ENCODE measurements at regions of chr6 and their contacts with region 1.

Region 1: DNA sequence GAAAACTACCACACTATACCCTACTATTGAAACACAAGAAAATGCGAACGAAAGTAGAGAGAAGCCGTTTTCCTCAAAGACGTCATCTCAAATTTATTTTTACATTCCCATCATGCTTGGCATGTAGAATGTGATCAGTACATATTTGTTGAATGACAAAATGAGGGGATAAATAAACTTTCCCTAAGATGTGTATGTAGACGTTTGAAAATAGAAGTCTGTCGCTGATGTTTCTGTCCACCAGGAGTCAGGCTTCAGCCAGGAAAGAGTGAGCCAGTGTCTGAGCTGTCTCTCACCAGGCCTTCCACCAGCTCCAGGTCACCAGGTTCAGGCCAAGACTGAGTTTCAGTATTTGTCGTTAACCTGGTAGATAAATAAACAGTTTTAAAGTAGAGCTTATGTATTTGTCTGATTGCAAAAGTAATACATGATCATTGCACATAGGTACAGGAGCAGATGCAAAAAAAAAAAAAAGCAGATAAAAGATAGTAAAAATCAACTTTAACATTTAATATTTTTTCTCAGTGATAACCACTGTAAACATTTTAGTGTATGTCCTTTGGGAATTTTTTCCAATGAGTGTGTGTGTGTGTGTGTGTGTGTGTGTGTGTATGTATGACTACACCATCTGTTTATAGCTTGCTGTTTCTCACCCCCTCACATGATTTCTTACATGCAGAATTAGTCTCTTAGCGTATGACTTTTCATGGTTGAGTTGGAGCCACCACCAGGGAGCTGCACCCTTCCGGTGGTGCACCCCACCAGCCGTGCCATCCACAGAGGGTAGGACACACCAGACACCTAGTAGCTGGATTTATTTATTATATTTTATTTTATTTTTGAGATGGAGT is 26.2 kb downstream of the WRNIP1 start:
- DNase-seq: peak; percentile 74
- ATAC-seq: peak; percentile 76
- H3K4me3 Mint-ChIP-seq: no peak overlapping the region
- H3K27ac Mint-ChIP-seq: peak overlapping the region; percentile 47
- H3K4me1 Mint-ChIP-seq: peaks cover 31% of the 10 kb centered on the region
- H3K27me3 Mint-ChIP-seq: no peaks in the 10 kb centered on the region

Region 2: DNA sequence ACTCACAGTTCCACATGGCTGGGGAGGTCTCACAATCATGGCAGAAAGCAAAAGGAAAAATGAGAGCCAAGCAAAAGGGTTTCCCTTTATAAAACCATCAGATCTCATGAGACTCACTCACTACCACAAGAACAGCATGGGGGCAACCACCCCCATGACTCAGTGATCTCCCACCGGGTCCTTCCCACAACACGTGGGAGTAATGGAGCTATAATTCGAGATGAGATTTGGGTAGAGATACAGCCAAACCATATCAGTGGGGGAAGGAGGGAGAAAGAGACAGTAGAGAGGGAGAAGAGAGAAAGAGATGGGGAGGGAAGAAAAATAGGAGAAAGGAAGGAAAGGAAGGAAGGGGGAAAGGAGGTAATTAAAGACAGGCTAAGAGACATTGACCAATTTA is 576.0 kb before region 1 on chr6:
- CTCF ChIA-PET with region 1: no interaction called
- POLR2A ChIA-PET with region 1: no interaction called
- DNase-seq: no peak
- ATAC-seq: no peak
- H3K4me3 Mint-ChIP-seq: no peak overlapping the region
- H3K27ac Mint-ChIP-seq: no peak overlapping the region
- H3K4me1 Mint-ChIP-seq: peaks cover 5% of the 10 kb centered on the region
- H3K27me3 Mint-ChIP-seq: peaks cover 1% of the 10 kb centered on the region

Region 3: GRCh38 chr6:2765166-2765895 is 26.0 kb before region 1 on chr6 and contains the start of gene WRNIP1:
- CTCF ChIA-PET with region 1: interaction called, 26 read pairs
- POLR2A ChIA-PET with region 1: interaction called, 5 read pairs
- DNase-seq: peak; percentile 98
- ATAC-seq: peak; percentile 91
- H3K4me3 Mint-ChIP-seq: peak within 1 kb of the TSS; percentile 92
- H3K27ac Mint-ChIP-seq: peak within 1 kb of the TSS; percentile 97
- H3K4me1 Mint-ChIP-seq: peaks cover 55% of the 10 kb centered on the region
- H3K27me3 Mint-ChIP-seq: no peaks in the 10 kb centered on the region
- total RNA-seq, gene WRNIP1: 48.2 to 49.6 TPM

Region 4: DNA sequence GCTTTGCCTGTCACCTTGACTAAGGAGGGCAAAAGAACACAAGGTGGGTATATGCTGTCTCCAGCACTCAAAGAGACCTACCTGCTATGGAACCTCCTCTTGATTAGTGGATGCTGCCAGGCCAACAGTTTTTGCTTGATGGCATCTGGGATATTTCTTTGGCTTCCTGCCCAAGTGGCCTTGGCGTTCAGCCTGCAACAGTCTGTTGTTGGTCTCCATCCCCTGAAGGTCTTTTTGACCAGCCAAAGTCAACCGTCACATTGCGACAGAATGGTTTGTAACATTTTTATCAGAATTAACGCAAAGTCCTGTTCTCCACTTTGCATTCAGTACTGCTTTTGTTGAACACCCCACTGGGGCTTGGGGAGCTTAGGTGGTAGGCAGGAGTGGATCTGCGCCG is 13.2 kb after region 1 on chr6:
- CTCF ChIA-PET with region 1: interaction called, 11 read pairs
- POLR2A ChIA-PET with region 1: no interaction called
- DNase-seq: no peak
- ATAC-seq: no peak
- H3K4me3 Mint-ChIP-seq: no peak overlapping the region
- H3K27ac Mint-ChIP-seq: no peak overlapping the region
- H3K4me1 Mint-ChIP-seq: peaks cover 15% of the 10 kb centered on the region
- H3K27me3 Mint-ChIP-seq: no peaks in the 10 kb centered on the region

Region 5: DNA sequence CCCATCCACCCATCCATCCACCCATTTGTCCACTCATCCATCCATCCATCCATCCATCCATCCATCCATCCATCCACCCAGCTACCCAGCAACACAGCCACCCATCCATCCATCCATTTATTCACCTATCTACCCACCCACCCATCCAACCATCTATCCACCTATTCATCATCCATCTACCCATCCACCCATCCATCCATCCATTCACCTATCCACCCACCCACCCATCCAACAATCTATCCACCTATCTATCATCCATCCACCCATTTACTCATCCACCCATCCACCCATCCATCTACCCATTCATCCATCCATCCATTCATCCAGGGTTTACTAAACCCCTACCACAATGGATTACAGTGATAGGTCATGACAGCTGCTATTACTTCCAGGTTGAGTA is 42.9 kb after region 1 on chr6:
- CTCF ChIA-PET with region 1: interaction called, 79 read pairs
- POLR2A ChIA-PET with region 1: no interaction called
- DNase-seq: no peak
- ATAC-seq: no peak
- H3K4me3 Mint-ChIP-seq: no peak overlapping the region
- H3K27ac Mint-ChIP-seq: no peak overlapping the region
- H3K4me1 Mint-ChIP-seq: peaks cover 17% of the 10 kb centered on the region
- H3K27me3 Mint-ChIP-seq: no peaks in the 10 kb centered on the region

Region 6: DNA sequence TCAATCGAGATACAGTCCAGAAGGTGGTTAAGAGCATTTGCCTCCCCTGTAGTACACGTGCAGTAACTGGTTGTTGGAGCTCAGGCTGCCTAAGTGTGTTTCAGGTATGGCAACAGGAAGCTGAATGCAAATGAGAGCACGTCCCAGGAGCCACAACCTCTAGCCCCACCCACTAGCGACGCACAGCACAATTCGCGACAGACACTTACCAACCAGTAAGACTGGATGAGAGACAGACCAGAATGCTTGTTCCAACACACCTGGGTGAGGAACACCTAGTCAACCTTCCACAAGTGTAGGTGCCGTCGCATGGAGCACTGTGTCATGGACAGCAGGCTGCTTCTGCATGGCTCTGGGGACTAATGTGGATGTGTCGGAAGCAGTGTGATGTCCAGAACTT is 57.5 kb after region 1 on chr6:
- CTCF ChIA-PET with region 1: interaction called, 66 read pairs
- POLR2A ChIA-PET with region 1: no interaction called
- DNase-seq: peak; percentile 81
- ATAC-seq: peak; percentile 72
- H3K4me3 Mint-ChIP-seq: peak overlapping the region; percentile 3
- H3K27ac Mint-ChIP-seq: peak overlapping the region; percentile 68
- H3K4me1 Mint-ChIP-seq: peaks cover 53% of the 10 kb centered on the region
- H3K27me3 Mint-ChIP-seq: no peaks in the 10 kb centered on the region

Region 7: DNA sequence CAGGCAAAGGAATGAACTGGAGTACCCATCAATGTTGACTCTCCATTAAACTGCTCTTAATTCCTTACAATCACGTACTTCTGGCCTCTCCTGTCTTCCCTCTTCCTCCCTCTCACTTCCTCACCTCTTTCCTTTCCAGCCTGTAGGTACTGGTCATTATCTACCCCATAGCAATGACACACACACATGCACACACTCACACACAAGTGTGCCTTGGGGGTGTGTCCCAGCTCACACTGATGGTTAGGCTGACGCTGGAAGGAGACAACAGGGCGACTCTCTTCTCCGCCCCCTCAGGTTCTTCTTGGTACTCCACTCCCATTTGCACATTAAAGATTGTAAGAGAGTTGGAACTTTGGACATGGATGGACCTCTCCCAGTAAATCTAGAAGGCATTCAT is 125.7 kb after region 1 on chr6:
- CTCF ChIA-PET with region 1: interaction called, 24 read pairs
- POLR2A ChIA-PET with region 1: no interaction called
- DNase-seq: peak; percentile 18
- ATAC-seq: no peak
- H3K4me3 Mint-ChIP-seq: no peak overlapping the region
- H3K27ac Mint-ChIP-seq: no peak overlapping the region
- H3K4me1 Mint-ChIP-seq: peaks cover 24% of the 10 kb centered on the region
- H3K27me3 Mint-ChIP-seq: peaks cover 3% of the 10 kb centered on the region

Region 8: DNA sequence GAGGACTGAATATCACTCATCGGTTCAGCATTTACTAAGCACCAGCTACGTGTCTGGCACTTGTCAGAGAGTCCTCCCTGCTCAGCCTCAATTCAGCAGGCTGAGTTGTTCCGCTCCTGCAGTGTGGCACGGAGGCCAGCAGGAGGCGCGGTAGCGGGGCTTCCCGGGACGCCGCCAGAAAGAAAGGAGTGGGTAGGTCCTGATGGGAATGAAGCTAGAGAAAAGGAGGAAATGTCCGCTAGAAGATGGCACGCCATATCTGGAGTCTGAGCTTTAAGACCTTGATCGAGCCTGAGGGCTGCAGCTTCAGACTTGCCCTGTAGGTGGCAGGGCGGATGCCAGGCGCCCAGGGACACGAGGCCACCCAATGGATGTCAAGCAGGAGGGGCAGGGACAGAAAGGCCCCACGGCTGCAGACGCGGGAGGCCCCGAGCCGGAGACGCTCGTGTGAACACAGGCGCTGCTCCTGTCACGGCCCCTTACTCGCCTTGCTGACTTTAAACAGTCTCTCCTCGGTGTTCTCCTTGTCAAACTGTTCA is 161.3 kb after region 1 on chr6:
- CTCF ChIA-PET with region 1: interaction called, 17 read pairs
- POLR2A ChIA-PET with region 1: no interaction called
- DNase-seq: peak; percentile 73
- ATAC-seq: peak; percentile 92
- H3K4me3 Mint-ChIP-seq: peak overlapping the region; percentile 18
- H3K27ac Mint-ChIP-seq: peak overlapping the region; percentile 49
- H3K4me1 Mint-ChIP-seq: peaks cover 14% of the 10 kb centered on the region
- H3K27me3 Mint-ChIP-seq: no peaks in the 10 kb centered on the region

Measured in activated CD8-positive, alpha-beta T cell treated with anti-CD3 and anti-CD28 coated beads, Interleukin-2, amount 10 ng/mL, durations not matched to agents 7 days and 5 days (primary cell).